ENCODE measurements at regions of chr19 and their contacts with region 1.

Region 1: DNA sequence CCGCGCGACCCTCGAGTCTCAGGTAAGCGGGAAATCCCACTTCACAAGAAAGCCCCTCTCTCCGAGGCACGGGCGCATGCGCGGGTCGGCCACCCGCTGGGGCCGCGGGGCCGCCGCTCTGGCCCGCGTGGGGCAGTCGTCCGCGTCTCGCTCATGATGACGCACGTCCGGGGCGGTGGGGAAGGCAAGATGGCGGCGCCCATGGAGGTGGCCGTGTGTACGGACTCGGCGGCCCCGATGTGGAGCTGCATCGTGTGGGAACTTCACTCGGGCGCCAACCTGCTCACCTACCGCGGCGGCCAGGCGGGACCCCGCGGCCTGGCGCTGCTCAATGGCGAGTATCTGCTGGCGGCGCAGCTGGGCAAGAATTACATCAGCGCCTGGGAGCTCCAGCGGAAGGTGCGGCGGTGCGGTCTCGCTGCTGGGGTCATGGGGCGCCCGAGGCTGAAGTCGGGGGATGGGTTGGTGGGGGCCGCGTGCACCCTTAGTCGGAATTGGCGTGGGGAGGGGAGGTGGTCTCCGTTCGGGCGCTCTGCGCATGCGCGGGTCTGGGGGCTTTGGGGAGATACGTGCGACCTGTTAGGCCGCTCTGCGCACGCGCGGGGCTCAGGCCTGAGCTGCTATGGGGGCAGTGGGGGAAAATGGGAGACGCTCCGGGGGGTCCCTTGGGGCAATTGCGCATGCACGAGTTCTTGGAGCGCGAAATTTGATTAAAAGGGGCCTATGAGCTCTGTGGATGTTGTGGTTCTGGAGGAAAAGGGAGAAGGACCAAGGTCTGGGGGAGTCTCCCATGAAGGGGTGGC is at the start of gene WDR18:
- DNase-seq: peak; percentile 71 to 94 (median 84)
- ATAC-seq: peak; percentile 90
- H3K4me3 ChIP-seq: peak within 1 kb of the TSS; percentile 96
- H3K4me3 Mint-ChIP-seq: peak within 1 kb of the TSS; percentile 94
- H3K27ac ChIP-seq: peak within 1 kb of the TSS; percentile 72 to 75
- H3K27ac Mint-ChIP-seq: peak within 1 kb of the TSS; percentile 78
- H3K4me1 ChIP-seq: peaks cover 34% of the 10 kb centered on the region
- H3K4me1 Mint-ChIP-seq: peaks cover 15% of the 10 kb centered on the region
- H3K27me3 ChIP-seq: no peaks in the 10 kb centered on the region
- H3K27me3 Mint-ChIP-seq: no peaks in the 10 kb centered on the region
- CTCF ChIP-seq: no peak
- total RNA-seq, gene WDR18: 16.8 to 17.1 TPM

Region 2: DNA sequence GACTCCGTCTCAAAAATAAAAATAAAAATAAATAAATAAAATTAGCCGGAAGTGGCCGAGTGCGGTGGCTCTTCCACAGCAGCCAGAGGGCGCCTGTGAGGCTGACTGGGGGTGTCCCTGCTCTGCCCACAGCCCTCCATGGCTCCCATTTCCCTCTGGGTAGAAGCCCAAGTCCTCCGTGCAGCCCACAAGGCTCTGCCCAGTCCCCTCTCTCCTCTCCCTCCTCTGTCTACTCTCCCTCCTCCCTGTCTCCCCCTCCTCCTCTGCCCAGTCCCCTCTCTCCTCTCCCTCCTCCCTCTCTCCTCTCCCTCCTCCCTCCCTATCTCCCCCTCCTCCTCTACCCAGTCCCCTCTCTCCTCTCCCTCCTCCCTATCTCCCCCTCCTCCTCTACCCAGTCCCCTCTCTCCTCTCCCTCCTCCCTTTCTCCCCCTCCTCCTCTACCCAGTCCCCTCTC is 213.0 kb before region 1 on chr19:
- CTCF ChIA-PET with region 1: interaction called, 5 read pairs
- POLR2A ChIA-PET with region 1: no interaction called
- intact Hi-C with region 1: loop called (anchors 1 to 2 kb)
- DNase-seq: peak in 5 of 14 experiments; percentile 13 to 69 (median 31)
- ATAC-seq: peak; percentile 56
- H3K4me3 ChIP-seq: no peak overlapping the region
- H3K4me3 Mint-ChIP-seq: no peak overlapping the region
- H3K27ac ChIP-seq: no peak overlapping the region
- H3K27ac Mint-ChIP-seq: no peak overlapping the region
- H3K4me1 ChIP-seq: no peaks in the 10 kb centered on the region
- H3K4me1 Mint-ChIP-seq: peaks cover 4% of the 10 kb centered on the region
- H3K27me3 ChIP-seq: no peaks in the 10 kb centered on the region
- H3K27me3 Mint-ChIP-seq: peaks cover 9% of the 10 kb centered on the region
- CTCF ChIP-seq: no peak

Region 3: DNA sequence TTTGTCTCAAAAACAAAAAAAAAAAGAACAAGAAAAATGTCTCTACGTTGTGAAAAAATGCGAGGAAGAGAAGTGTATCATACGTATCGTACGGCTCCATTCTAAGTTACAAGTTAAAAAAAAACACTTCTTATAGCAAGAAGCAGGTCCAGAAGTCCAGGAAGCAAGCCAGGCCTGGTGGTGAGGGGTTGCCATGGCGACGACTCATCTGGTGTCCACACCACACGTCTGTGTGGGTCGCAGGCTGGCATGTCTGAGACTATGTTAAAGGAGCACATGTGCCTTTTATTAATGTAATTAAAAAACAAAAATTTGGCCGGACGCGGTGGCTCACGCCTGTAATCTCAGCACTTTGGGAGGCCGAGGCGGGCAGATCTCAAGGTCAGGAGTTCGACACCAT is 97.3 kb before region 1 on chr19:
- CTCF ChIA-PET with region 1: no interaction called
- POLR2A ChIA-PET with region 1: no interaction called
- intact Hi-C with region 1: no loop called
- DNase-seq: no peak
- ATAC-seq: no peak
- H3K4me3 ChIP-seq: no peak overlapping the region
- H3K4me3 Mint-ChIP-seq: no peak overlapping the region
- H3K27ac ChIP-seq: no peak overlapping the region
- H3K27ac Mint-ChIP-seq: no peak overlapping the region
- H3K4me1 ChIP-seq: peaks cover 15% of the 10 kb centered on the region
- H3K4me1 Mint-ChIP-seq: peaks cover 12% of the 10 kb centered on the region
- H3K27me3 ChIP-seq: no peaks in the 10 kb centered on the region
- H3K27me3 Mint-ChIP-seq: no peaks in the 10 kb centered on the region
- CTCF ChIP-seq: no peak

Region 4: GRCh38 chr19:920051-920864 is 64.1 kb before region 1 on chr19:
- CTCF ChIA-PET with region 1: interaction called, 33 read pairs
- POLR2A ChIA-PET with region 1: interaction called, 10 read pairs
- intact Hi-C with region 1: loop called (anchors 1 kb)
- DNase-seq: peak; percentile 54 to 91 (median 72)
- ATAC-seq: peak; percentile 51
- H3K4me3 ChIP-seq: peak overlapping the region; percentile 43
- H3K4me3 Mint-ChIP-seq: peak overlapping the region; percentile 96
- H3K27ac ChIP-seq: peak overlapping the region in 1 of 2 donors; percentile 41
- H3K27ac Mint-ChIP-seq: peak overlapping the region; percentile 96
- H3K4me1 ChIP-seq: peaks cover 62% of the 10 kb centered on the region
- H3K4me1 Mint-ChIP-seq: peaks cover 21% of the 10 kb centered on the region
- H3K27me3 ChIP-seq: peaks cover 11 to 22% of the 10 kb centered on the region in 2 experiments
- H3K27me3 Mint-ChIP-seq: peaks cover 4% of the 10 kb centered on the region
- CTCF ChIP-seq: no peak

Region 5: DNA sequence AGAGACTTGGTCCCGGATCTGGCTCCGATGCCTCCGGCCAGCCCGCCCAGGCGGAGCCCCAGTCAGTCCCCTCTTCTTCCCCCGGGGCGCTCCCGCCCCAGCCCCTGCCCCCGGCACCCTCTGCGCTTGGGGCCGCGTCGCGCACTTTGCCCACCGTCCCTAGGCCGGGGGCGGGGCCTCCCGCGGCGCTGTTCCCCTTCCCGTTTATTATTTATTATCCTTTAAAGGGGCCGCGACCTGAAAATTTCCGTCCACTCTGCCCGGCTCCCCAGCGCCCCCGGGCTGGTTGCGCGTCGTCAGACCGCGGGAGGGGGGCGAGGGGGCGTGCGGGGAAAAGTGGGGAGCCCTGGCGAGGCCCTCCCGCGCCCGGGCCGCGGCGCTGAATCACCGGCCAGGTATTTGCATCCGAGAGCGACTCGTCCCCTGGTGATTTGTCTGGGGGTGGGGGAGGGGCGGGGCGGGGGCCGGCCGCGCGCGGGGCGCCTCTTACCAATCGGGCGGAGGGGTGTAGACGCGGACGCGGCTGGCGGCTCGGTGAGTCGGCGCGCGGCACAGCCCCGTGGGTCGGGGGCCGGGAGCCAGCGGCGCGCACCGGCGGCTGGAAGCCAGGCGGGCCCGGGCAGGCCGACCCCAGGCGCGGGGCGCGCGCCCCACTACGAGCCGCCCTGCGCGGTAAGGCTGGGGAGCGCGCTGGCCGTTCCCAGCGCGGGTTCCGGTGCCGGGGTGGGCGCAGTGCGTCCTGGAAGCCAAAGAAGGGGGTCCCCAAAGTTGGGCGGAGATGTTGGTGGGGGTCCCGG is 58.6 kb before region 1 on chr19 and contains the start of gene ARID3A:
- CTCF ChIA-PET with region 1: interaction called, 33 read pairs
- POLR2A ChIA-PET with region 1: interaction called, 10 read pairs
- intact Hi-C with region 1: loop called (anchors 1 kb)
- DNase-seq: peak; percentile 55 to 87 (median 72)
- ATAC-seq: peak; percentile 66
- H3K4me3 ChIP-seq: peak within 1 kb of the TSS; percentile 83
- H3K4me3 Mint-ChIP-seq: peak within 1 kb of the TSS; percentile 86
- H3K27ac ChIP-seq: peak within 1 kb of the TSS in 1 of 2 donors; percentile 60
- H3K27ac Mint-ChIP-seq: peak within 1 kb of the TSS; percentile 36
- H3K4me1 ChIP-seq: peaks cover 44% of the 10 kb centered on the region
- H3K4me1 Mint-ChIP-seq: peaks cover 15% of the 10 kb centered on the region
- H3K27me3 ChIP-seq: no peaks in the 10 kb centered on the region
- H3K27me3 Mint-ChIP-seq: no peaks in the 10 kb centered on the region
- CTCF ChIP-seq: no peak
- total RNA-seq, gene ARID3A: 3.7 to 4.1 TPM

Region 6: DNA sequence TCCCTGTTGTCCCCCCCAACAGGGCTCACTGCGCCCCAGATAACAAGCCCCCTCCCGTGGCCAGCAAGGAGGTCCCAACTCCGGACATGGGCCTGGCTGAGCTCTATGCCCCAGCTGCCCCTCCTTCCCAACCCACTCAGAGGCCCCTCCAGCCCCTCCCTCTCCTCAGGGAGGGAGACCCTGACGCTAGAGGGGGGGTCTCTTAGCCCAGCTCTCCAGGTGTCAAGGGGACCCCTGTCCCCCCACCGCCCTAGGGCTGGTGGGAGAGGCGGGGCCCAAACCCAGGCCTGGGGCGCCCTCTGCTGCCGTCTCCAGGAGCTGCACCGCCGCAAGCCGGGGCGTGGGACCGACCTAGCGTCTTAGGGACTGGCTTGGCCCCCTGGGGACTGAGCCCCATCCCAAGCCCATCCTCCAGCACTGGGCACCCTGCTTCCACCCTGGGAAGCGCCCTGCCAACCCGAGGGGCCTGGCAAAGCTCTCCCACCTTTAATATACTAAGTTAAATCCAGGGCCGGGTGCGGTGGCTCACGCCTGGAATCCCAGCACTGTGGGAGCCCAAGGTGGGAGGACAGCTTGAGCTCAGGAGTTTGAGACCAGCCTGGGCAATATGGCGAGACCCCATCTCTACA is 17.3 kb after region 1 on chr19:
- CTCF ChIA-PET with region 1: interaction called, 3 read pairs
- POLR2A ChIA-PET with region 1: interaction called, 6 read pairs
- intact Hi-C with region 1: loop called in 1 of 2 experiments (anchors 1 kb)
- DNase-seq: peak in 13 of 14 experiments; percentile 62 to 82 (median 71)
- ATAC-seq: peak; percentile 82
- H3K4me3 ChIP-seq: no peak overlapping the region
- H3K4me3 Mint-ChIP-seq: no peak overlapping the region
- H3K27ac ChIP-seq: no peak overlapping the region
- H3K27ac Mint-ChIP-seq: no peak overlapping the region
- H3K4me1 ChIP-seq: peaks cover 23% of the 10 kb centered on the region
- H3K4me1 Mint-ChIP-seq: peaks cover 7% of the 10 kb centered on the region
- H3K27me3 ChIP-seq: peaks cover 30 to 40% of the 10 kb centered on the region in 2 experiments
- H3K27me3 Mint-ChIP-seq: peaks cover 26% of the 10 kb centered on the region
- CTCF ChIP-seq: peak; percentile 91